Activated naive CD4-positive, alpha-beta T cell treated with anti-CD3 and anti-CD28 coated beads for 36 hours (primary cell): ENCODE measurements at regions of chr16 and their contacts with region 1.

Region 1: GRCh38 chr16:50368410-50369132 is at the start of gene BRD7:
- DNase-seq: peak; percentile 62
- H3K4me3 Mint-ChIP-seq: peak within 1 kb of the TSS; percentile 96
- H3K27ac Mint-ChIP-seq: peak within 1 kb of the TSS; percentile 86
- H3K4me1 Mint-ChIP-seq: peaks cover 46% of the 10 kb centered on the region
- H3K27me3 Mint-ChIP-seq: no peaks in the 10 kb centered on the region
- total RNA-seq, gene BRD7: 96.7 to 101 TPM

Region 2: GRCh38 chr16:50266337-50267091 is 102.1 kb before region 1 on chr16 and contains the start of gene ADCY7:
- CTCF ChIA-PET with region 1: no interaction called
- intact Hi-C with region 1: loop called (anchors 5 kb)
- DNase-seq: peak; percentile 91
- H3K4me3 Mint-ChIP-seq: peak within 1 kb of the TSS; percentile 86
- H3K27ac Mint-ChIP-seq: peak within 1 kb of the TSS; percentile 94
- H3K4me1 Mint-ChIP-seq: peaks cover 60% of the 10 kb centered on the region
- H3K27me3 Mint-ChIP-seq: peaks cover 3% of the 10 kb centered on the region
- total RNA-seq, gene ADCY7: 73.4 to 89.6 TPM